Panc1 (cell line): ENCODE measurements at regions of chr5 and their contacts with region 1.

Region 1: DNA sequence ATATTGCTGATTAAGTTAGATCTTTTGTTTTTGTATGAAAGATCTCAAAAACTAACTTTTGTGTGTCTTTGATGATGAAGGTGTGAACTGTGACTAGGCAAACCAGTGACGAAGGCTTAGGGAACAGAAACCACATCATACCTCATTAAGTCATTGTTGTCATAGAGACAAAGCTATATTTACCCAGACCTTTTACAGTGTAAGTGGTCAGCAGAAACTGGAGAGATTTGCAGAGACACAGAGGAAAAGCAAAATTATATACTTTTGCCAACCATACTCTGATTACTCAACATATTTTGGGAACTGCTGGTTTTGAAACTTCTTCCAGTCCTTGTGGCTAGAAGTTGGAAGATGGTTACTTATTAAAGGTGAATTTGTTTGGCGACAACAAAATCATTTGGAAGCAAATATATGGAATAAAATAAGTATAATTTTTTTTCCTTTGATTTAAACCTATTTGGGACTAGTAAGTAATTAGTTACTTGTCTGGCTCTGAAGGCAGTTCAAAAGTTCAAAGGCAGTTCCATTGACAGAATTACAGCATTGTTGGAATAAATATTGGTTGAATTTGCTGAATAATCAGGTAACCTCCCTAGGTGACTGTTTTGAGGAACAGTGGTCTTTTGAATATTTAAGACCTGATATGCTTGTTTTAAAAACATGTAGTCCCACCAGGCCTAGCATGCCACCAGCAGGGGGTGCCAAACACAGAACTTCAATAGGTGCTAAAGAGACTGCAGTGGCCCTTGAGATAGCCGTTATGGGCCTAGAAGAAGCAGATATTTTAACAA is 103.8 kb downstream of the RPS23 start:
- DNase-seq: no peak
- ATAC-seq: peak; percentile 78; the same call in 1 of the 2 replicates
- H3K4me3 ChIP-seq: no peak overlapping the region
- H3K27ac ChIP-seq: no peak overlapping the region
- H3K4me1 ChIP-seq: no peaks in the 10 kb centered on the region
- H3K27me3 ChIP-seq: no peaks in the 10 kb centered on the region
- CTCF ChIP-seq: peak; percentile 81

Region 2: DNA sequence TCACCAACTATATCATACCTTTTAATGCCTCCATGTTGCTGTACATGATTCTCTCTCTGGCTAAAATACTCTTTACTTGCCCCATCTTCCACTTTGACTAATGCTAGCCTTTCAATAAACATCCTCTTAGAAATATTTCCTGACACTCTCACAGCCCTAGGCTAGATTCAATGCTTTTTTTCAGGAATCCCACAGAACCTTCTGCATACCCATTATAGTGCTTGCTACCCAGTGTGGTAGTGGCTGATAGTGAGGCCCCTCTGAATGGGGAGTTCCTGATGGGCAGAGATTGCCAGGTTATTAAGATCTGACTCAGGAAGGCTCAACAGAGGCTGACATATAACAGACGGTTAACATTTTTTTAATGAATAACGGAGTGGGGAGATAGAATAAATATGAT is 435.0 kb before region 1 on chr5:
- CTCF ChIA-PET with region 1: interaction called, 10 read pairs
- POLR2A ChIA-PET with region 1: no interaction called
- in situ Hi-C with region 1: no loop called
- intact Hi-C with region 1: loop called (anchors 10 kb)
- DNase-seq: no peak
- ATAC-seq: no peak
- H3K4me3 ChIP-seq: no peak overlapping the region
- H3K27ac ChIP-seq: no peak overlapping the region
- H3K4me1 ChIP-seq: 0 out of 2 replicates have a peak, but pooled peaks cover 4% of the 10 kb centered on the region
- H3K27me3 ChIP-seq: no peaks in the 10 kb centered on the region
- CTCF ChIP-seq: no peak

Region 3: DNA sequence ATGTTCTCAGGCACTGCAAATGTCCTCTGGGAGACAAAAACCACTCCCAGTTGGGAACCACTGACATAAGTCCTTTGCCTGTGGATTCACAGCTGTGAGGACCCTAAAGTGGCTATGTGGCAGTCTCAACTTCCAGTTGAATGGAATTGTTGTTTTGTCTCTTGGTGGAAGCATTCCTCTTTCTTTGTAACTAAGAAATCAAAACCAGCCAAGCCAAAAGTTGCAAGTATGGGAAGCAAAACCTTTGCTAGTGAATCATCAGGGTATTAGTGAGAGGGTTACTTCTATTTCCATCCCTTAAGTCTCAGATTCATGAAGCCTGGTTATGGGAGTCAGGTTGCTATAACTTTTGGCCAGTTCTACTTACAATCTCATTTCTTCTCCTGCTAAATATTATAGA is 153.6 kb after region 1 on chr5:
- CTCF ChIA-PET with region 1: no interaction called
- POLR2A ChIA-PET with region 1: no interaction called
- in situ Hi-C with region 1: no loop called
- intact Hi-C with region 1: no loop called
- DNase-seq: no peak
- ATAC-seq: no peak
- H3K4me3 ChIP-seq: no peak overlapping the region
- H3K27ac ChIP-seq: no peak overlapping the region
- H3K4me1 ChIP-seq: no peaks in the 10 kb centered on the region
- H3K27me3 ChIP-seq: 0 out of 2 replicates have a peak, but pooled peaks cover 3% of the 10 kb centered on the region
- CTCF ChIP-seq: no peak

Region 4: GRCh38 chr5:83731638-83732037 is 1557.3 kb after region 1 on chr5:
- CTCF ChIA-PET with region 1: no interaction called
- POLR2A ChIA-PET with region 1: no interaction called
- in situ Hi-C with region 1: no loop called
- intact Hi-C with region 1: no loop called
- DNase-seq: no peak
- ATAC-seq: no peak
- H3K4me3 ChIP-seq: no peak overlapping the region
- H3K27ac ChIP-seq: no peak overlapping the region
- H3K4me1 ChIP-seq: no peaks in the 10 kb centered on the region
- H3K27me3 ChIP-seq: no peaks in the 10 kb centered on the region
- CTCF ChIP-seq: no peak